ENCODE measurements at regions of chr22 and their contacts with region 1.

Region 1: GRCh38 chr22:21816787-21817496 is 50.5 kb downstream of the MAPK1 start:
- DNase-seq: peak; percentile 87
- H3K4me3 Mint-ChIP-seq: peak overlapping the region; percentile 77
- H3K27ac Mint-ChIP-seq: peak overlapping the region; percentile 93
- H3K4me1 Mint-ChIP-seq: peaks cover 40% of the 10 kb centered on the region
- H3K27me3 Mint-ChIP-seq: no peaks in the 10 kb centered on the region

Region 2: GRCh38 chr22:21719024-21719423 is 97.9 kb before region 1 on chr22:
- intact Hi-C with region 1: no loop called
- DNase-seq: no peak
- H3K4me3 Mint-ChIP-seq: no peak overlapping the region
- H3K27ac Mint-ChIP-seq: no peak overlapping the region
- H3K4me1 Mint-ChIP-seq: no peaks in the 10 kb centered on the region
- H3K27me3 Mint-ChIP-seq: peaks cover 1% of the 10 kb centered on the region

Region 3: GRCh38 chr22:21735200-21736076 is 81.5 kb before region 1 on chr22 and contains the start of gene YPEL1:
- intact Hi-C with region 1: loop called (anchors 1 kb)
- DNase-seq: peak; percentile 99
- H3K4me3 Mint-ChIP-seq: peak within 1 kb of the TSS; percentile 87
- H3K27ac Mint-ChIP-seq: peak within 1 kb of the TSS; percentile 84
- H3K4me1 Mint-ChIP-seq: peaks cover 17% of the 10 kb centered on the region
- H3K27me3 Mint-ChIP-seq: peaks cover 23% of the 10 kb centered on the region
- total RNA-seq, gene YPEL1: 0.61 and 1.3 TPM in 2 replicates

Region 4: DNA sequence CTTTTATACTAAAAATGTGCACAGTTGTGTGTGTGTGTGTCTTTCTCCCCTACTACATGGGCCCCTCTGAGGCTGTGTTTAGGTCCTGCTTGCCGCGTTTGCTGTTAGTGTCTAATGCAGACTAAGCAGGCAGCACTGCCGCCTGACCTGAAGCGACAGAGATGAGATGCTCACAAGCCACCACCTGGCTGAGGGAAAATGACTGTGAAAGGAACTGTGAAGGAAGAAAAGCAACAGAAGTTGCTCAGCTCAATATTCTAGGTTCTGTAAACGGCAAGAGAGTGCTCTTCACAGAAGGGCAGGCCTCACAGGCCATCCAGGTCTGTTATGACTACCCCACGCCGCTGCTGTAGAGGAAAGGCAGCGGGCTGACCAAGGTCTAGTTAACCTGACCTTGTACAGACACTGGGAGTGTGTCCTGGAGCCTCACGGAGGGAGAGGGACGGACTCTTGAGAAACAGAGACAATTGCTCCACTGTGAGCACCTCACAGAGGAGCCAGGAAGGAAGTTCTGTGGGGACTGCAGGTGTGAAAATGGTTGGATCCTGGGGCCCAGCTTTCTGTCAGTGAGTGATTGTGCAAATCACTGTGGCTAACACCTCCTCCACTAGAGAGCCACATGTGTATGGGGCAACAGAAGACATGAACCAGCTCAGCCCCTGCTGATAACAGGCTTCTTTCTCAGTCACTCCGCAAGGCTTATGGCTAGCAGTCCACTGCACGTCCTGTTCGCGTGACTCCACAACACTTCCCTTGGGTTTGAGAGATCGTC is 50.1 kb before region 1 on chr22:
- intact Hi-C with region 1: loop called (anchors 1 kb)
- DNase-seq: peak; percentile 85
- H3K4me3 Mint-ChIP-seq: peak overlapping the region; percentile 51
- H3K27ac Mint-ChIP-seq: peak overlapping the region; percentile 84
- H3K4me1 Mint-ChIP-seq: peaks cover 60% of the 10 kb centered on the region
- H3K27me3 Mint-ChIP-seq: no peaks in the 10 kb centered on the region

Region 5: GRCh38 chr22:21791635-21792625 is 25.0 kb before region 1 on chr22:
- intact Hi-C with region 1: loop called (anchors 2 kb)
- DNase-seq: peak; percentile 63
- H3K4me3 Mint-ChIP-seq: peak overlapping the region; percentile 4
- H3K27ac Mint-ChIP-seq: peak overlapping the region; percentile 79
- H3K4me1 Mint-ChIP-seq: peaks cover 13% of the 10 kb centered on the region
- H3K27me3 Mint-ChIP-seq: no peaks in the 10 kb centered on the region

Region 6: DNA sequence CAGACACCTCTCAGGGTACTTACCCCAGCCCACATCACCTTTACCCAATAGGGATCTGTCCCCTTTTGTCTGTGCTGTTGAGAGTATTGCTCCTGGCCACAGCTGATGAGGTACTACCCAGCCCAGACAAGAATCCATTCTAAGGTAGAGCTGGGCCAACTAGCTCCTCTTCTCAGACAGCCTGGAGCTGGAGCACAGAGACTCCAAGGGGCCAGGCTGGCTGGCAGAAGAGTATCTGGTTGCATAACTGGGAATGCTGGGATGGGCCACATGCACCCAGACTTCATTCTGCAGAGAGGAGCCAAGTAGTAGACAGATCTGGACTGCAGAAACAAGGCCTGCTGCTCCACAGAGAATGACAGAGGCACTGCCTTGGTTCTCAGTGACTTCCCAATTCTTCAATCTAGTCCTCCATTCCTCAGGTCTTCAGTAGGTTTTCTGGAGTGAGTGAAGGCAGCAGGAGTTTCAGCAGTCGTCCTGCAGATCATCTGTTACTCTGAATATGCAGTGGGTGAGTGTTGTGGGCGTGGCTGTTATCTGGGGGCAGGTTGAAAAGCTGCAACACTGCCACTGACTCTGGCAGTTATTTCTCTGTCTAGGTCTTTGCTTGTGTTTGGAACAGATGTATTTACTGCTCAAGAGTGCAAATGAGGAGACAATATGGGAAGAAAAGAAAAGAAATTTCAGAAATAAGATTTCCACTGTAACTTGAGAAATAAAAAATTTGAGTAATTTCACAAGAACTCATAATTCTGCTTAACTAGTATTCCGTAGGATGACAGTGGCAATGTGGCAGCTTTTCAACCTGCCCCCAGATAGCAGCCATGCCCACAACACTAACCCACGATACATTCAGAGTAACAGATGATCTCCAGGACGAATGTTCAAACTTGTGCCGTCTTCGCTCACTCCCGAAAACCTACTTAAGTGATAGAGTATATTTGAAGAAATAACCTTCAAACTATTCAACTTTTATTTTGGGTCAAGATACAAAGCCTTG is 15.6 kb after region 1 on chr22:
- intact Hi-C with region 1: no loop called
- DNase-seq: no peak
- H3K4me3 Mint-ChIP-seq: no peak overlapping the region
- H3K27ac Mint-ChIP-seq: no peak overlapping the region
- H3K4me1 Mint-ChIP-seq: peaks cover 28% of the 10 kb centered on the region
- H3K27me3 Mint-ChIP-seq: no peaks in the 10 kb centered on the region

Region 7: DNA sequence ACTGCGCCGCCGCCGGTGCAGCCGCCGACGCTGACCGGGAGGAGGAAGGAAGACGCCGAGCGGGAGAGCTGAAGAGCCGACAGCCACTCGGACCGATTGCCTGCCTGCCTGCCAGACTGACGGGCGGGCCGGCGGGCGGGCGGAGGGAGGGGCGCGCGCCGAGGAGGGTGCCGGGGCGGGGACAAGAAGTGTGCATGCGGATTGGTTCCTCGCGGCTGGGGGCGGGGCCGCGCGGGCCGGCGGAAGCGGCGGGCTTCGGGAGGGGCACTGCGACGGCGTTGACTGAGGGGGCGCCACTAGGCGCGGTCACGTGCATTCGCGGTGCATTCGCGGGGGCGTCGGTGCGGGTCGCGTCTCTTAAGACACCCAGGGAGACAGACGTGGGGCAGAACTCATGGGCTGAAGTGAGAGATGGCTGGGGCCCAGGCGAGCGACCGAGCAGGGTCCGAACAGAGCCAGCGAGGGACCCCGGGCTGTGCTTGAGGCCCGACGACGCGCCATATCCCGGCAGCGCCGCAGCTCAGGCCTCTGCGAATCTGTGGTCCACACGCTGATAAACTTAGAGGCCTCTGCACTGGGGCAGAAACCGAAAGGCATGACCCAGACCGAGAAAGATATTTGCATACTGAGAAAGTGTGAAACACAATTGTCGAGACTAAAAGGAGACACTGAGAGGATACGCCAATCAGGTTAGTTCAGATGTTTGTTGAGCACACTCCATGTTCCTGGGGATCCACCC is 50.8 kb after region 1 on chr22 and contains the start of gene MAPK1:
- intact Hi-C with region 1: loop called (anchors 2 kb)
- DNase-seq: peak; percentile 98
- H3K4me3 Mint-ChIP-seq: peak within 1 kb of the TSS; percentile 92
- H3K27ac Mint-ChIP-seq: peak within 1 kb of the TSS; percentile 97
- H3K4me1 Mint-ChIP-seq: peaks cover 34% of the 10 kb centered on the region
- H3K27me3 Mint-ChIP-seq: peaks cover 19% of the 10 kb centered on the region
- total RNA-seq, gene MAPK1: 101 TPM in 2 replicates

Region 8: GRCh38 chr22:21876486-21877176 is 59.7 kb after region 1 on chr22:
- intact Hi-C with region 1: loop called (anchors 1 kb)
- DNase-seq: peak; percentile 64
- H3K4me3 Mint-ChIP-seq: no peak overlapping the region
- H3K27ac Mint-ChIP-seq: peak overlapping the region; percentile 90
- H3K4me1 Mint-ChIP-seq: peaks cover 11% of the 10 kb centered on the region
- H3K27me3 Mint-ChIP-seq: peaks cover 8% of the 10 kb centered on the region

Region 9: GRCh38 chr22:21917181-21917958 is 100.4 kb after region 1 on chr22:
- intact Hi-C with region 1: no loop called
- DNase-seq: no peak
- H3K4me3 Mint-ChIP-seq: no peak overlapping the region
- H3K27ac Mint-ChIP-seq: no peak overlapping the region
- H3K4me1 Mint-ChIP-seq: no peaks in the 10 kb centered on the region
- H3K27me3 Mint-ChIP-seq: no peaks in the 10 kb centered on the region